Left lung (tissue), 14 donors: ENCODE measurements at regions of chr20 and their contacts with region 1.

Region 1: DNA sequence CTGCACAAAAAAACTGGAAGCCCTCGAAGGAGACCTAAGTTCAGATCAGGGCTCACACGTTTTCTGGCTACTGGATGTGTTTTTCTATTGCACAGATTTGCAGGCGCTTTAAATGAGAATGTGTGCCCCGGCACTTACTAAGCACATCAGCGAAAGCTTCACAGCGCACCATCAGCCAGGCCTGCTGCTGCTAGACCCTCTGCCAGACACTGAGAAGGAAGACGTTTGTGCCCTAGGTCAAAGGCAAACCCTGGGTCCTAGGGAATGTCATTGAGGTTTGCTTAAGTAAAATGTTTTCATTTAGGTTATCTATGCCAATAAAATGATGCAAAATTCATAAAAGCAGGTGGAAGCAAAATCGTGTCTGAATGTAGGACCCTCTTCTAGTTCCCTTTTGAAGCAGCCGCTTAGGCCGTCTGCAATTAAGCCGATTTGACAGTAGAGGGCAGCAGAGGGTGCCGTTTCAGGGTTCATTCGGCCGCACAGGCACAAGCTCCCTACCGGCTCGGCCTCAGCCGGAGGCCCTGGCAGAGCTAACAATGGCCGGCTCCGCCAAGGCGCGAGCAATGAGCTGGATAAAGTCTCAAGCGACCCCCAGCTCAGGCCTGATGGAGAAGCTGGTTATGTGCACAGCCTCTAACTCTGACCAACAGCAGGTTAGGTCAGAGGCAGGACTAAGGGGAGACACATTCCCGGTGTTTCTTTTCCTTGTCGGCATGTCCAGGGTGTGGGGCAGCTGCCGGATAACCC is 107.2 kb upstream of the FOXA2 start:
- DNase-seq: peak; percentile 76 to 91 (median 83)
- ATAC-seq: peak; percentile 99
- H3K4me3 ChIP-seq: no peak overlapping the region
- H3K27ac ChIP-seq: peak overlapping the region in 1 of 2 donors; percentile 39
- H3K4me1 ChIP-seq: peaks cover 0 to 24% of the 10 kb centered on the region in 2 donors
- H3K27me3 ChIP-seq: no peaks in the 10 kb centered on the region
- CTCF ChIP-seq: peak; percentile 85 to 95

Region 2: DNA sequence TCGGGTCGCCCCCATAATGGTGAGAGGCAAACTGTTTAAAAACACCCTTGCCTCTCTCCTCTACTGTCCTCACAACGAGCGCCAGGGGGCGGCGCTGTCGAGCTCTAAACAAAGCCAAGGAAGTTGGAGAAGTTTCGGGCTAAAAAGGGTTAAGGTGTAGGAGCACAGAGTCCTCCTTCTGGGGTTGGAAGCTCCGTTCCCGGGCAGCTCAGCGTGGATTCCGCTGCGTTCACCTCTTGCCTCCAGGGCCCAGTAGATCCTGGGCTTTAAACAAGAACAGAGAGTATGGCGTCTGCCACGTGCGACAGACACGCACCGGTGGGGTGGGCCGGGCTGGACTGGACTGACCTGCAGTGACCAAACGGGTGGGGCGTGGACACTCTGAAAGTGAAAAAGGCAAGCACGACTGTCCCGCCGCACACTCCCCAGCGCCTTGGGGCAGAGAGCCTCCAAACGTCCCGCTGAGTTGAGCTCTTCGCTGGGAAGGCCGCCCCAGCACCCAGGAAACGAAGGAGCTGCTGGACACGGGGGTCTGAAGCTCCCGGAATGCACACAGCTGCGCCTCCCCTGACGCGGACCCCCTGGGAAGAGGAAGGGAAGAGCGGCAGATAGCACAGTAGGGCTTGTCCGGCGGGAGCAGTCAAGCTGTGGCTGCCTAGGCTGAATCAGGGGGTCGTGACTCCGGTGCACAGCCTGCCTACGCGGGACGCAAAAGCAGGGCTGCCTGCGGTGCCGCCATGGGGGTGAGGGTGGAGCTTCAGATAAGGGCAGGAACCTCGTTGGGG is 359.5 kb after region 1 on chr20:
- intact Hi-C with region 1: loop called in 1 of 2 experiments (anchors 10 kb)
- DNase-seq: peak in 3 of 4 donors; percentile 83 to 93 (median 88)
- ATAC-seq: peak; percentile 59
- H3K4me3 ChIP-seq: peak overlapping the region; percentile 51 to 53
- H3K27ac ChIP-seq: peak overlapping the region; percentile 89 to 91
- H3K4me1 ChIP-seq: peaks cover 7 to 53% of the 10 kb centered on the region in 2 donors
- H3K27me3 ChIP-seq: peaks cover 12 to 44% of the 10 kb centered on the region in 2 donors
- CTCF ChIP-seq: peak; percentile 57 to 83

Region 3: GRCh38 chr20:23235173-23236027 is 543.9 kb after region 1 on chr20:
- intact Hi-C with region 1: loop called in 1 of 2 experiments (anchors 10 kb)
- DNase-seq: peak in 3 of 4 donors; percentile 53 to 89 (median 74)
- ATAC-seq: peak; percentile 96
- H3K4me3 ChIP-seq: no peak overlapping the region
- H3K27ac ChIP-seq: no peak overlapping the region
- H3K4me1 ChIP-seq: no peaks in the 10 kb centered on the region
- H3K27me3 ChIP-seq: no peaks in the 10 kb centered on the region
- CTCF ChIP-seq: peak; percentile 51 to 87

Region 4: DNA sequence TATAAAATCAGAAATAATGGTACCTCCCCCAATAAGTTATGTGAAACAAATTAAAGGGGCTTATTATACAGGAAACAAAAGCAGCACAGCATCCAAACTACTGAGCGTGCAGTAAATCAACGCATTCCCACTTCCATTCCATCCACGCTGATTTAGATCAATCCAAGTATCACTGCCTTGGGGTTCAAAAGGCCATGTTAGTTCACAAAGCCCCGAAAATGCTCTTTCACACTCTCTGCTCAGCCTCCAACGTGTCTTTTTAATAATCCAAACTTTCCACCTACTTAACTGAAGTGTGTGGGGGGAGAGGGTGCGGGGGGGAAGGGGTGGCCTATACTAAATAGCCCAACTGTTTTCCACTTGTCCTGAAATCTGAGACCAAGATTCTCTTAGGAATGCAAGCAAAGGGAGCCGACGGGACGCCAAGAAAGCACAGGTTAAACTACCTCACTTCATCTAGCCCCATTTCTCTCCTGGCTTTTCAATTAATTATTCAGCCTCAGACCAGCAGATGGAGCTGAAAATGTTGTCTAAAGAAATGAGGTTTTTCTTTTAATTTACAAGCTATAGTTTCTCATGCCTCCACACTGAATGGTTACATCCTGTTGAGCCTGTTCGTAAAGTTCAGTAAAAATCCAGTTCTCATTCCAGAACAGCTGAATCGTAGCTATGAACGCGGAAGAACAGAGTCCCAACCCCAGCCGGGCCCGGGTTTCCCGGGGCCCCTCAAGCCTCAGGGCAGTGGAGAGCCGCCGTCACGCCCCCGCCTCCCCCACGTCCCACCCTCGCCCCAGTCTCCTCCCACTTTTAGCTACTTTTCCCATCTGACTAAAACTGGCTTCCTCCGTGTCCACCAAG is 658.0 kb after region 1 on chr20:
- intact Hi-C with region 1: loop called in 1 of 2 experiments (anchors 10 kb)
- DNase-seq: peak in 2 of 4 donors; percentile 82 to 92
- ATAC-seq: peak; percentile 83
- H3K4me3 ChIP-seq: peak overlapping the region; percentile 98
- H3K27ac ChIP-seq: peak overlapping the region; percentile 99 to 100
- H3K4me1 ChIP-seq: peaks cover 17 to 25% of the 10 kb centered on the region in 2 donors
- H3K27me3 ChIP-seq: no peaks in the 10 kb centered on the region
- CTCF ChIP-seq: peak; percentile 21 to 28